Naive thymus-derived CD4-positive, alpha-beta T cell (primary cell): ENCODE measurements at regions of chr17 and their contacts with region 1.

Region 1: DNA sequence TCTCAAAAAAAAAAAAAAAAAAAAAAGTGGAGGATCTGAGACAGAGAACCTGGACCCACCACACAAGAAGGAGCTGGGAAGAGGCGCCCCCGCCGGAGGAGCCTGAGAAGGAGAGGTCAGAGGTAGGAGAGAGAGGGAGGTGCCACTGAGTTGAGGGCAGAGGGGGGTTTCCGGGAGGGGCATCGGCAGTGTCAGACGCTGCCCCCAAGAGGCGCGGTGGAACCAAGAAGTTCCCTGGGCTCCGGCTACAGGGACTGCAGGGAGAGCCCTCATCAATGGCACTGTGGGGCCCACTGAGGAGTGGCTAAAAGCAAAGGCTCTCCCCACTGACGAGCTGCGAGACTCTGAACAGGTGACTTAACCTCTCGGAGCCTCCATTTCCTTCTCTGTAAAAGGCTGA is 4.2 kb downstream of the CCDC42 start:
- DNase-seq: peak; percentile 30 to 69 (median 45)
- ATAC-seq: peak; percentile 83
- H3K4me3 ChIP-seq: peak overlapping the region; percentile 61
- H3K4me3 Mint-ChIP-seq: peak overlapping the region; percentile 80 to 90 (median 85)
- H3K27ac ChIP-seq: peak overlapping the region; percentile 62
- H3K27ac Mint-ChIP-seq: peak overlapping the region; percentile 48 to 89 (median 80)
- H3K4me1 ChIP-seq: peaks cover 8 to 9% of the 10 kb centered on the region in 2 donors
- H3K4me1 Mint-ChIP-seq: peaks cover 13 to 21% (median 15%) of the 10 kb centered on the region in 7 donors
- H3K27me3 ChIP-seq: no peaks in the 10 kb centered on the region
- H3K27me3 Mint-ChIP-seq: peaks cover 0 to 19% (median 0%) of the 10 kb centered on the region in 5 donors

Region 2: DNA sequence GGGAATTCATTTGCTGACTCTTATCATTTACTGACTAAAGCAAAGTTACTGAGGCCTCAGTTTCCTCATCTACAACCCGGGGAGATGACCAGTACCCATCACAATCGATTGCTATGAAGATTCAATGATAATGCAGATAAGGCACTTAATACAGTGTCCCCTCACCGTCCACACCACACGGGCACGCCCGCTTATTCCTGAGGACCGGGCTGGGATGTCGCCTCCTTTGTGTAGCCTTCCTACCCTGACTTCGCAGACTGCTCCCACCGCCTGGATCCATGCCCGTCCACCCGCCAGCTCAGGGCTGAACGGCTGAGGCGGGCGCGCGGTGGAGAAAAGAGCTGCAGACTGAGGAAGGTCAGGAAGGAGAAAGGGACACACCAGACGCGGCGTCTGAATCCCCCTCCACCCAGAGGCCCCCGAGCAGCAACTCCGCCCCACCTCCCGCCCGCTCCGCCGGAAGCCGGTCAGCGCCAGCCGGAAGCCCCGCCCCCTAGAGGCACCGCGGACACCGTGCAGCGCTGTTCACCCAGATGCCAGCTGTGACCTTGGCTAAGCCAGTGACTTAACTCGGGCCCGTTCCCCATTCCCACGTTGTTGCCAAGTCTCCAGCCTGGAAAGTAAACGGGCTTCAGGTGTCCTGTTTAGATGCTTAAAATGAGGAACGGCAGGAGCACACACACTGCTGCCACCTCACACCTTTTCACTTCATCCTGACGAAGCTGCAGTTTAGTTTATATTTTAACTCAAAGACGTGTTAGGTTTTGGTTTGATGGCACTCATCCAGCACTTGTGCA is 364.0 kb before region 1 on chr17 and contains the start of gene KRABD2:
- CTCF ChIA-PET with region 1: no interaction called
- POLR2A ChIA-PET with region 1: no interaction called
- intact Hi-C with region 1: loop called in 1 of 2 experiments (anchors 1 kb)
- DNase-seq: peak; percentile 77 to 92 (median 85)
- ATAC-seq: peak; percentile 100
- H3K4me3 ChIP-seq: peak within 1 kb of the TSS; percentile 87
- H3K4me3 Mint-ChIP-seq: peak within 1 kb of the TSS; percentile 82 to 96 (median 90)
- H3K27ac ChIP-seq: peak within 1 kb of the TSS; percentile 80
- H3K27ac Mint-ChIP-seq: peak within 1 kb of the TSS; percentile 62 to 94 (median 92)
- H3K4me1 ChIP-seq: peaks cover 28 to 31% of the 10 kb centered on the region in 2 donors
- H3K4me1 Mint-ChIP-seq: peaks cover 32 to 61% (median 46%) of the 10 kb centered on the region in 7 donors
- H3K27me3 ChIP-seq: no peaks in the 10 kb centered on the region
- H3K27me3 Mint-ChIP-seq: no peaks in the 10 kb centered on the region

Region 3: GRCh38 chr17:8630802-8631553 is 109.5 kb before region 1 on chr17:
- CTCF ChIA-PET with region 1: no interaction called
- POLR2A ChIA-PET with region 1: no interaction called
- intact Hi-C with region 1: loop called in 1 of 2 experiments (anchors 2 kb)
- DNase-seq: peak; percentile 63 to 91 (median 82)
- ATAC-seq: peak; percentile 97
- H3K4me3 ChIP-seq: peak overlapping the region; percentile 64
- H3K4me3 Mint-ChIP-seq: peak overlapping the region; percentile 91 to 100 (median 99)
- H3K27ac ChIP-seq: peak overlapping the region; percentile 66
- H3K27ac Mint-ChIP-seq: peak overlapping the region in 7 of 9 donors; percentile 35 to 95 (median 80)
- H3K4me1 ChIP-seq: peaks cover 5% of the 10 kb centered on the region in 2 donors
- H3K4me1 Mint-ChIP-seq: peaks cover 0 to 18% (median 13%) of the 10 kb centered on the region in 7 donors
- H3K27me3 ChIP-seq: peaks cover 3 to 4% of the 10 kb centered on the region in 2 donors
- H3K27me3 Mint-ChIP-seq: peaks cover 30 to 67% (median 51%) of the 10 kb centered on the region in 5 donors

Region 4: GRCh38 chr17:8806926-8807550 is 66.6 kb after region 1 on chr17:
- CTCF ChIA-PET with region 1: no interaction called
- POLR2A ChIA-PET with region 1: no interaction called
- intact Hi-C with region 1: no loop called
- DNase-seq: no peak
- ATAC-seq: peak; percentile 94
- H3K4me3 ChIP-seq: no peak overlapping the region
- H3K4me3 Mint-ChIP-seq: no peak overlapping the region
- H3K27ac ChIP-seq: no peak overlapping the region
- H3K27ac Mint-ChIP-seq: peak overlapping the region in 2 of 9 donors; percentile 17 to 38
- H3K4me1 ChIP-seq: no peaks in the 10 kb centered on the region
- H3K4me1 Mint-ChIP-seq: peaks cover 0 to 4% (median 0%) of the 10 kb centered on the region in 7 donors
- H3K27me3 ChIP-seq: no peaks in the 10 kb centered on the region
- H3K27me3 Mint-ChIP-seq: no peaks in the 10 kb centered on the region